Cardiac septum (tissue), 1 donor: ENCODE measurements at regions of chr11 and their contacts with region 1.

Region 1: DNA sequence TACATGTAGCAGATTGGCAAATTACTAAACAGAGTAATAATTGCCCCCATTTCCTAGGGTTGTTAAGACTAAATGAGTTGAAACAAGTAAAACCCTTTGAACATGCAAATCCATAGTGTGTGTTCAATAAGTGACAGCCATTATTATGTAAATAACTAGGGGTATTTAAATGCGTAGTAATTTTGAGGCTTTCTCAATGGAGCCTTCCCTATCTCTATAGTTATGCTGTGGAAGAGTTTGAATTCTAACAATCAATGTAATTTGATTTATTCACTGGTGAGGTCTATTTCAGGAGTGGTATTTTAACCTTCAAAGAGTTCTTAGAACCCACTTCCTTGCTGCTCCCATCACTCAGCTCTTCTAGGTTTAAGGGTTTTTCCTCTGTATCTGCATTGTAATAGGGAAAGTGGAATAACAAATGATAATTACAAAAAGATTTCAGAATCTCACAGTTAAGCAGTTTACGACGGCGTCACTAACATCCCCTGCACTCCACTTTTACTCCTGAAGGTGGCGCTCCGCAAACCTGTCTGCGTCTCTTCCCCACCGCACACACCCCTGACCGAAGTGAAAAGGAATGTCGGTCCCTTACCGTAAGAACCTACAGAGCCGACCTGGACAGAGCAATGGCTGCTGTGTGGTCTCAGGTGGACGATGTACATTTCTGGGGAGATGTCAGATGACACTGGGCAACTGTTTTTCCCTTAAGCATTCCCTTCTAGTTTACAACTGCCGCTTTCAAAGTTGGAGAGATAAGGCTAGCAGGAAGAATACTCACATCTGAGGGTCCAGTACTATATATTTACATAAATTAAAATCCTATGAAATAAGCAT is 80.8 kb downstream of the ZC3H12C start:
- DNase-seq: peak; percentile 82

Region 2: GRCh38 chr11:109960831-109961230 is 213.2 kb before region 1 on chr11:
- intact Hi-C with region 1: loop called (anchors 10 kb)
- DNase-seq: no peak